Activated CD4-positive, alpha-beta T cell treated with anti-CD3 and anti-CD28 coated beads for 36 hours (primary cell): ENCODE measurements at regions of chr9 and their contacts with region 1.

Region 1: GRCh38 chr9:96859461-96860198 is 5.3 kb upstream of the ZNF782 start:
- DNase-seq: no peak
- ATAC-seq: no peak
- H3K4me3 Mint-ChIP-seq: no peak overlapping the region
- H3K27ac Mint-ChIP-seq: no peak overlapping the region
- H3K4me1 Mint-ChIP-seq: peaks cover 18% of the 10 kb centered on the region
- H3K27me3 Mint-ChIP-seq: peaks cover 11% of the 10 kb centered on the region

Region 2: DNA sequence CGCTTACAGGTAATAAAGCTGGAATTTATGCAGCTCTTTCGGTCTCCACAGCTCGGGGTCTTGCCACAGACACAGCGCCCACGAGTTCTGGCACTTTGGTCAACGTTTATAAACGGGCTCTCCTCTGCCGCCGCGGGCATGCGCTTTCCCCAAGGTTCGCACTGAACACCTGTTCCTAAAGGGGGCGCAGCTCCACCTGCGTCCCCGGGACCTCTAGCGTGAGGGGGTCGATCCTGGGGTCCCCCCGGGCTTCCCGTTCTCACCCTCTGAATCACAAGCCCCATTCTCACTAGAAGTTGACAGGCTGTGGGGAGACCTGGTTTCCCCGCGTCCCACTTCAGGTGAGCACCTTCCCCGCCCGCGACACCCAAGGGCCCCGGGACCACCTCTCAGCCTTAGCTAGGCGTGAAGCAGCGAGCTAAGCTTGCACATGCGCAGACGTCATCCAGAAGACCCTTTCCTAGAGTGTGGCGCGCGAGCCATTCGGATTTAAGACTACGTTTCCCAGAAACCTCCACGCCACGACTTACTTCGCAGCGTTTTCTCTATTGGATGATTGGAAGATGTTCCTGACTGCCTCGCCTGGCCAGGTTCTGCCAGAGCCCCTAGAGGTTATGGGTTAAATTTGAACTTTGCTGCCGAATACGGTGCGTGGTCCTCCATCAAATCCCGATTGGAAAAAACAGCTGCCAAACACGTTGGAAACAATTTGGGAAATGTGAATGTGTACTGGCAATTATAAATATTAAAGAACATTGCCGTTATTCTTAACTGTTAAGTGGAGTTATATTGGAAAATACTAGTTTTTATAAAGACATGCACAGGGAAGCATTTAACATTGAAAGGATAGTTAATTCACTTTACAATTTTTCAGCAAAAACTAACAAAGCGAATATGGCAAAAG is 16.1 kb after region 1 on chr9:
- CTCF ChIA-PET with region 1: interaction called, 69 read pairs
- POLR2A ChIA-PET with region 1: no interaction called
- intact Hi-C with region 1: loop called (anchors 1 to 2 kb)
- DNase-seq: peak; percentile 73
- ATAC-seq: peak; percentile 67
- H3K4me3 Mint-ChIP-seq: peak overlapping the region; percentile 76
- H3K27ac Mint-ChIP-seq: peak overlapping the region; percentile 87
- H3K4me1 Mint-ChIP-seq: peaks cover 26% of the 10 kb centered on the region
- H3K27me3 Mint-ChIP-seq: peaks cover 44% of the 10 kb centered on the region